PC-9 (cell line): ENCODE measurements at regions of chr5 and their contacts with region 1.

Region 1: GRCh38 chr5:97093193-97093592 is 49.2 kb downstream of the LIX1 start:
- DNase-seq: no peak
- H3K4me3 ChIP-seq: no peak overlapping the region
- H3K27ac ChIP-seq: no peak overlapping the region
- H3K4me1 ChIP-seq: no peaks in the 10 kb centered on the region
- H3K27me3 ChIP-seq: no peaks in the 10 kb centered on the region
- CTCF ChIP-seq: no peak

Region 2: GRCh38 chr5:96384353-96384752 is 708.8 kb before region 1 on chr5:
- CTCF ChIA-PET with region 1: no interaction called
- POLR2A ChIA-PET with region 1: interaction called, 11 read pairs
- intact Hi-C with region 1: no loop called
- DNase-seq: peak; percentile 64 to 76
- H3K4me3 ChIP-seq: no peak overlapping the region
- H3K27ac ChIP-seq: no peak overlapping the region
- H3K4me1 ChIP-seq: peaks cover 11% of the 10 kb centered on the region
- H3K27me3 ChIP-seq: no peaks in the 10 kb centered on the region
- CTCF ChIP-seq: no peak

Region 3: GRCh38 chr5:97131139-97131710 is 38.0 kb after region 1 on chr5:
- CTCF ChIA-PET with region 1: no interaction called
- POLR2A ChIA-PET with region 1: no interaction called
- intact Hi-C with region 1: no loop called
- DNase-seq: no peak
- H3K4me3 ChIP-seq: no peak overlapping the region
- H3K27ac ChIP-seq: no peak overlapping the region
- H3K4me1 ChIP-seq: no peaks in the 10 kb centered on the region
- H3K27me3 ChIP-seq: no peaks in the 10 kb centered on the region
- CTCF ChIP-seq: no peak